ENCODE measurements at regions of chr11 and their contacts with region 1.

Region 1: GRCh38 chr11:5123802-5124521 is 14.2 kb downstream of the OR52A5 start:
- DNase-seq: peak; percentile 29 to 79 (median 64)
- H3K4me3 ChIP-seq: no peak overlapping the region
- H3K27ac ChIP-seq: peak overlapping the region in 1 of 59 donors; percentile 24
- H3K27me3 ChIP-seq: peaks cover 0 to 7% (median 0%) of the 10 kb centered on the region in 45 donors
- CTCF ChIP-seq: peak; percentile 64 to 91 (median 82)

Region 2: DNA sequence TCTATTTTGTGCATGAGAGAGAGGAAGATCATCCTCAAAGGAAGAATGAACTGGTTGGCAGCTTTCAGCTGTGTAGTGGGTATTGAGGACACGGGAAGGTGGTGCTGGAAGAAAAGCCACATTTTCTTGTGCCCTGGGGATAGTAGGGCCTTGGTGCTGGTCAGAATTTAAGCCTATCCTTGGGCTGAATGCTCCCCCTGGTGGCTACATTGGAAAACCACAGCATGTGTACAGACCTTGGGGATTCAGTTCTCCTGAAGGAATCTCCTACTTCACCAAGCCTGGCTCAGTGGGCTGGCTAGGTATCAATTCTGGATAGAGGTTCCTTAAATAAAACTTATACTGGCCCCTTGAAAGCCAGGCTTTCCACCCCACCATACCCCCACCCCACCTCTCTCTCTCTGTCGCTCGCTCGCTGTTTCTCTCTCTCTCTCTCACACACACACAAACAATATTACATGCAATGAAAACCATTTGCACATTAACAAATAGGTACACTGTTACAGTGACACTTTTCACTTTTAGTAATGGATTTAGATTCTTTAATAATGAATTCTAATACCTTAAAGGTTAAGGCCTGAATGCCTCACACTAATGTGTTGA is 256.9 kb after region 1 on chr11:
- intact Hi-C with region 1: loop called (anchors 5 to 10 kb)
- DNase-seq: peak in 9 of 10 donors; percentile 20 to 62 (median 47)
- H3K4me3 ChIP-seq: no peak overlapping the region
- H3K27ac ChIP-seq: no peak overlapping the region
- H3K27me3 ChIP-seq: peaks cover 0 to 4% (median 0%) of the 10 kb centered on the region in 45 donors
- CTCF ChIP-seq: peak; percentile 38 to 79 (median 67)

Region 3: GRCh38 chr11:5808500-5809121 is 684.6 kb after region 1 on chr11 and contains the start of gene OR52N2:
- intact Hi-C with region 1: loop called (anchors 5 to 10 kb)
- DNase-seq: peak in 9 of 10 donors; percentile 26 to 76 (median 72)
- H3K4me3 ChIP-seq: peak within 1 kb of the TSS; percentile 11 to 68 (median 51)
- H3K27ac ChIP-seq: no peak within 1 kb of the TSS
- H3K27me3 ChIP-seq: peaks cover 0 to 18% (median 0%) of the 10 kb centered on the region in 45 donors
- CTCF ChIP-seq: peak; percentile 25 to 92 (median 80)
- total RNA-seq, gene OR52N2: 0.35 to 0.47 TPM in 2 of 120 experiments, not detected in the others

Region 4: GRCh38 chr11:6353367-6353987 is 1229.5 kb after region 1 on chr11:
- intact Hi-C with region 1: loop called in 1 of 2 experiments (anchors 10 kb)
- DNase-seq: peak in 3 of 10 donors; percentile 16 to 57 (median 51)
- H3K4me3 ChIP-seq: no peak overlapping the region
- H3K27ac ChIP-seq: no peak overlapping the region
- H3K27me3 ChIP-seq: no peaks in the 10 kb centered on the region
- CTCF ChIP-seq: peak; percentile 46 to 96 (median 86)